HEK293 (cell line): ENCODE measurements at regions of chr6 and their contacts with region 1.

Region 1: DNA sequence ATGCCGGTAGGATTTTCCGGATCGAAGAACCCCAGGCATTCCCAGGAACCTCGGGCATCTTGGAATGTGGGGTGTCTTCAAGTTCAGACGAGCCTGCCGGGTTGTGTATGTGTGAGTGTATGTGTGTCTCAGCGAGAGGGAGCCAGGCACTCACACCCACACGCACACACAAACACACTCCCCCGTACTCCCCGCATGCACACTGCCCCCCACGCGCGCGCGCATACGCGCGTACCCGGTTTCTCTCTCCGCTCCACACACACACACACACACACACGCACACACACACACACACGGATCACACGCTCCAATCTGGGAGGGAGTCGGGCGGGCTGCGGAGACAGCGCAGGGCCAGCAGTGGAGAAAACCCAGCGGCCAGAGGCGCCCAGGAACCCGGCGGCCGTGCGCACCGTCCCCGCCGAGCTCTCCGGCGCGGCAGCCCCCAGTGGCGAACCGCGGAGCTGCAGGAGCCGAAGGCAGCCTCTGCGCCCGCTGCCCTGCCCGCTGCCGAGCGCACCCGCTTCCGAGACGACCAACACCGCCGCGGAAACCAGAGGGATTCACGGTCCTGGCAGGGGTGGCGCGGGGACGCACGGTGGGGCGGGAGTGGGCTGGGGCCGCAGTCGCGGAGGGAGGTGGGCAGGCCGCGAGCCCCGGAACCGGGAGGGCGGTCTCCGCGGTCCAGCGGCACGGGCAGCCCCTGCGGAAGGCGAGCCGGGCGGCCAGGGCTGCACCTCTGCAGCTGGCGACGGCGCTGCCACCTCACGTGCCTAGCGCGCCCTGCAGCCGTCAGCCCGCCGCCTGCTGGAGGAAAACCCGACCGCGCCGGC is at the start of gene LRFN2:
- H3K4me3 ChIP-seq: peak within 1 kb of the TSS; percentile 55
- H3K27ac ChIP-seq: no peak within 1 kb of the TSS; the same call in 1 of the 2 replicates
- H3K4me1 ChIP-seq: no peaks in the 10 kb centered on the region; the same call in 1 of the 2 replicates
- CTCF ChIP-seq: peak; percentile 92

Region 2: GRCh38 chr6:40599555-40599954 is 12.1 kb after region 1 on chr6:
- CTCF ChIA-PET with region 1: interaction called, 15 read pairs
- POLR2A ChIA-PET with region 1: no interaction called
- H3K4me3 ChIP-seq: no peak overlapping the region
- H3K27ac ChIP-seq: no peak overlapping the region
- H3K4me1 ChIP-seq: no peaks in the 10 kb centered on the region
- CTCF ChIP-seq: no peak

Region 3: DNA sequence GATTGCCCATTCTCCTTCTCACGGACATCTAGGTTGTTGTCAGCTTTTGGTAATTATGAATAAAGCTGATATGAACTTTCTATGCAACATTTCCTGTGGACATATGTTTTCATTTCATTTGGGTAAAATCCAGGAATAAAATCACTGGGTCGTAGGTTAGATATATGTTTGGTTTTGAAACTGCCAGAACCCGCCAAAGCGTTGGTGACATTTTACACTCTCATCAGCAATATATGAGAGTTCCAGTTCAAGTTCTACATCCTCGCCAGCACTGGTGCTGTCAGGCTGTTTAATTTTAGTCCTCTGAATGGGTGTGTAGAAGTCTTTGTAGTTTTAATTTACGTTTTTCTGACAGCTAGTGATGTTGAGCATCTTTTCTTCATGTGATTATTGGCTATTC is 27.2 kb after region 1 on chr6:
- CTCF ChIA-PET with region 1: interaction called, 10 read pairs
- POLR2A ChIA-PET with region 1: no interaction called
- H3K4me3 ChIP-seq: no peak overlapping the region
- H3K27ac ChIP-seq: no peak overlapping the region
- H3K4me1 ChIP-seq: no peaks in the 10 kb centered on the region
- CTCF ChIP-seq: no peak